Heart right ventricle (tissue), 16 donors: ENCODE measurements at regions of chr6 and their contacts with region 1.

Region 1: DNA sequence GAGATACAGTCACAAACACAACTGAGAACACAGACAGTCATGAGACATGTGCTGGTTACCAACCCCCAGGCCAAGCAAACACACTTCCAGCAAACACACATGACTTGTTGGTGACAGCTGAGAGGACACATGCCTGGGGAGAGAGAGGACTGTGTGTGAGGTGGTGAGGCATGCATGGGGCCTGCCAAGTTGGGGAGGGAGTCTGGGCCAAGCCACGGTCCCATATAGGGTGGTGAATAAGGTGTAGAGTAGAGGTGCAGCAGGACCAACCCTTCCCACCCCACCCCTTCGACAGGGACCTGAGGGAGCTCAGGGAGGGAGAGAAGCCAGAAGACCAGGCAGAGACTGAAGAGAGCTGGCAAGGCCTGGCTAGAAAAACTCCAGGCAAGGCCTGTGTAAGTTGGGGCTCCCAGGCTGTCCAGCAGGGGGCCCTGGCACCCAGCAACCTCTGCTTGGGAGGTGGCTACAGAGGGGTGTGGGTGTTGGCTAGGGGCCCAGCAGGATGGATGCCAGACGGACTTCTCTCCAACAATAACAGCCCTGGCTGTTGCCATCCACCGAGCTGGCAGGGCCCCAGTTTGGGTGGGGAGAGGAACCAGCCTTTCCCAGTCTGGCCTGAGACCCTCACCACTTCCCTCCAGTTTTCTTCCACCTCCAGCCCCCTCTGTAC is 2.0 kb upstream of the SLC29A1 start:
- DNase-seq: peak; percentile 92 to 94
- ATAC-seq: peak; percentile 35 to 80 (median 68)
- H3K4me3 ChIP-seq: peak overlapping the region in 5 of 10 donors; percentile 72 to 87 (median 75)
- H3K27ac ChIP-seq: peak overlapping the region; percentile 82 to 98 (median 94)
- H3K4me1 ChIP-seq: peaks cover 40 to 97% (median 92%) of the 10 kb centered on the region in 9 donors
- H3K27me3 ChIP-seq: no peaks in the 10 kb centered on the region
- CTCF ChIP-seq: peak; percentile 61 to 93 (median 80)

Region 2: GRCh38 chr6:43990627-43991619 is 230.5 kb before region 1 on chr6:
- intact Hi-C with region 1: no loop called
- DNase-seq: no peak
- ATAC-seq: peak in 7 of 8 donors; percentile 2 to 33 (median 8)
- H3K4me3 ChIP-seq: no peak overlapping the region
- H3K27ac ChIP-seq: peak overlapping the region; percentile 41 to 94 (median 84)
- H3K4me1 ChIP-seq: peaks cover 12 to 70% (median 24%) of the 10 kb centered on the region in 9 donors
- H3K27me3 ChIP-seq: no peaks in the 10 kb centered on the region
- CTCF ChIP-seq: no peak

Region 3: GRCh38 chr6:44161997-44162338 is 59.5 kb before region 1 on chr6:
- intact Hi-C with region 1: no loop called
- DNase-seq: no peak
- ATAC-seq: no peak
- H3K4me3 ChIP-seq: no peak overlapping the region
- H3K27ac ChIP-seq: no peak overlapping the region
- H3K4me1 ChIP-seq: no peaks in the 10 kb centered on the region
- H3K27me3 ChIP-seq: peaks cover 0 to 5% (median 0%) of the 10 kb centered on the region in 7 donors
- CTCF ChIP-seq: no peak

Region 4: GRCh38 chr6:44257025-44257752 is 35.8 kb after region 1 on chr6 and contains the start of gene SLC35B2:
- intact Hi-C with region 1: loop called in 1 of 10 experiments (anchors 2 kb)
- DNase-seq: peak; percentile 68 to 70
- ATAC-seq: peak; percentile 66 to 89 (median 76)
- H3K4me3 ChIP-seq: peak within 1 kb of the TSS; percentile 80 to 100 (median 98)
- H3K27ac ChIP-seq: peak within 1 kb of the TSS; percentile 87 to 98 (median 96)
- H3K4me1 ChIP-seq: peaks cover 11 to 58% (median 22%) of the 10 kb centered on the region in 9 donors
- H3K27me3 ChIP-seq: no peaks in the 10 kb centered on the region
- CTCF ChIP-seq: peak; percentile 55 to 94 (median 80)
- total RNA-seq, gene SLC35B2: 19.4 to 29.8 (median 23.7) TPM